Activated naive CD4-positive, alpha-beta T cell treated with anti-CD3 and anti-CD28 coated beads for 36 hours (primary cell): ENCODE measurements at regions of chrX and their contacts with region 1.

Region 1: DNA sequence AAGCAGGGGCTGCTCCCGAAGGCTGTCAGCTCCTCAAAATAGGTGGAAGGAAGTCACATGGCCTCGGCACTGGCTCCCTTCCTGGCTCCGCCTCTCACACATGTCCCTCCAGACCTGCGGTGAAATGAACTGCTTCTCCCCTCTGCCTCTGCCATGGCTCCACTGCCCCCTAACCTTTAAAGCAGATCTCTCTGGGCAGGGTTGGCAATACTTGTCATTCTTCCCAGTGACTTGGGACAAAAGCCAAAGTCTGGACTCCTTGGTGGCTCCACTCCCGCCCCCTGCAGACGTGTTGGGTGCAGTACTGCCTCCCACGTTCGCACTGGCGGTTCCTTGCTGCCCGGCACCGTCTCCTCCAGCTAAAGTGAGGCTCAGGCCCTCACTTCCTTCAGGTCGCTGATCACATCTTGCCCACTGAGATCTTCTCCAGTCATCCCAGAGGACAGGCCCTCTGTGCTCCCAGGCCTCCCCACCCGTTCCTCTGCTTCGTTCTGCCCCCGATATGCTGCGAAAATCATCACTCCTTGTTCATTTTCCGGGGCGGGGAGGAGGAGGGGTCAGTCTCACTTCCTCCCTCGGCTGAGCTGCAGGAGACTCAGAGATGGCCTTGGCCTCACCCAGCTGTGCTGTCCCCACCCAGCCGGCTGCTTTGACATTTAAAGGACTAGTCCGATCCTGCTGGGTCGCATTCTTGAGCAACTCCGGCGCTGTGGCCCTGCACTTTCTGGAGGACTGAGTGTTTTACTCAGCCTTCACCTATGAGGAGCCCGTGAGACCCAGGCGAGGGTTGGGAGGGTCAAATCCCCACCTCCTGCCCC is 97.4 kb downstream of the PHKA2 start:
- DNase-seq: peak; percentile 73
- H3K4me3 Mint-ChIP-seq: peak overlapping the region; percentile 75
- H3K27ac Mint-ChIP-seq: peak overlapping the region; percentile 84
- H3K4me1 Mint-ChIP-seq: peaks cover 28% of the 10 kb centered on the region
- H3K27me3 Mint-ChIP-seq: no peaks in the 10 kb centered on the region

Region 2: DNA sequence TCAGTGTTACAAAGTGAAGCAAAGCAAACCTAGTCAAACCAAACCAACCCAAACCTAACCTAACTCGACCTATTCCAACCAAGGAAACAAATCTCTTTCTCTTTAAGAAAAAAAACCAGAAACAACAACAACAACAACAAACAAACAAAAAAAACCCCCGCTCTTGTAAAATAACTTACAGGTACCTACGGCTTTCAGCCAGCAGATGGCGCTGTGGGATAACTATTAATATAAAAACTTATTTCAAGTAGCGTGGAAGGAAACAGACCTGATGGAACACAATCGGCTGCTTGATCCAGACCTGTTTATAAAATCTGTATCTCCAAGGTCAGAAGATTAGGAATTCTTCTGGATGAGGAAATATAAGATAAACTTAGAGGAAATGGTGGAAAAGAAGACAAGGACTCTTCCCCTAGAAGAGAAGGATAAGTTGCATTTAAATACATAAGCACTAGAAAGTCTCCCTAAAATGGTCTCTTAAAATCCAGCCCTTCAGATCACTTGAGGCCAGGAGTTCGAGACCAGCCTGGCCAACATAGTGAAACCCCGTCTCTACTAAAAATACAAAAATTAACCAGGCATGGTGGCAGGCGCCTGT is 495.5 kb before region 1 on chrX:
- CTCF ChIA-PET with region 1: interaction called, 8 read pairs
- intact Hi-C with region 1: loop called (anchors 5 kb)
- DNase-seq: peak; percentile 70
- H3K4me3 Mint-ChIP-seq: no peak overlapping the region
- H3K27ac Mint-ChIP-seq: no peak overlapping the region
- H3K4me1 Mint-ChIP-seq: no peaks in the 10 kb centered on the region
- H3K27me3 Mint-ChIP-seq: no peaks in the 10 kb centered on the region

Region 3: DNA sequence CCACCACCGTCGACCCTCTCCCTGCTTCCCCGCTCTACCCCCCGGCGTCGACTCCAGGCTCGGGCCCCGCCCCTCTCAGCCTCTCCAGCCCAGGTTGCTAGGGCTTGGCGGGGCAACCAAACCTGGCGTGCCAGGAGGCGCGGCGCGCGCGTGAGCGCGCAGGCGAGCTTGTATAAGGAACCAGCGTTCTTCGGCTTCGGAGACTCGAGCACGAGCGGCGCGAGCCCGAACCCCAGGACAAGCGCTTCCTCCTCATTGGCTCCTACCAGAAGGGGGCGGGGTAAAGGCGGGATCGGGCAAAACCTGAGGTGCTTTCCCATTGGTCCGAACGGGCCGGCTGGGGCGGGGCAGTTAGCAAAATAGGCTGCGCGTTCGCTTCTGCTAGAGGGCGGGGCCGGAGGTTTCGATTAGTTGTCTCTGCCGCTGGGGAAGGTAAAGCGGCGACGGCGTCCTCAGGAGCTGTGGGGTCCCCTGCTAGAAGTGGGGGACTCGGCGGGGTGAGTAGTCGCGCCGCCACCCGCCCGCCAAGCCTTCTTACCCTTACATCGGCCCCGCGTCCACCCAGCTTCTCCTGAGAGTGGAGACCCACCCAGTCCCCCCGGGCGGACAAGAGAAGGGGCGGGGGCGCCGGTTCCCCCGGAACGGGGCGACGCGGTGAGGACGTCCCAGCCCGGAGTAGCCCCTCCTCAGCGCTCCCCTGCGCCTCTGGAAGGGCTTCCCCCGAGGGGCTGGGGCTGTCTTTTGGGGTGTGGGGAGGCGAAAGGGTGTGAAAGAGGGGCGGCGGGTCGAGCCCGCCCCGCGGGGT is 461.2 kb before region 1 on chrX and contains the start of gene CDKL5:
- CTCF ChIA-PET with region 1: no interaction called
- intact Hi-C with region 1: loop called (anchors 1 kb)
- DNase-seq: peak; percentile 97
- H3K4me3 Mint-ChIP-seq: peak within 1 kb of the TSS; percentile 77
- H3K27ac Mint-ChIP-seq: no peak within 1 kb of the TSS
- H3K4me1 Mint-ChIP-seq: peaks cover 7% of the 10 kb centered on the region
- H3K27me3 Mint-ChIP-seq: no peaks in the 10 kb centered on the region
- total RNA-seq, gene CDKL5: 0.91 to 1.4 TPM

Region 4: DNA sequence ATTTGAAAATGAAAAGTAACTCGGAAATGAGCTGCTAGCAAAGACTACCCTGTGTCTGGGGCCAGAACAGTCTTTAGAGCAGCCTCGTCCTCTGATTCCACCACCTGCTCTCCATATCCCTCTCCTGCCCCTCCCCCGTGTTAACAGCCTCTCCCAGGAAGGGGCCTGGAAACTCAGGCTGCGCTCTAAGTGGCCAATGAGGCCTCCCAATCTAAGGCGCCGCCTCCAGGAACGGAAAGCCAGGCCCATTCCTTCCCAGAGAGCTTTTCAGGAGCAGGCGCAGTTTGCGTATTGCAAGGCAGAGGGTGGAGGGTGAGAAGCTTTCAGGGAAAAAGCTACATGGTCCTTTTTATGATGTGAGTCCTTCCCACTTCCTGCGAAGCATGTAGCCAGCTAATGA is 245.9 kb before region 1 on chrX:
- CTCF ChIA-PET with region 1: no interaction called
- intact Hi-C with region 1: no loop called
- DNase-seq: no peak
- H3K4me3 Mint-ChIP-seq: no peak overlapping the region
- H3K27ac Mint-ChIP-seq: no peak overlapping the region
- H3K4me1 Mint-ChIP-seq: no peaks in the 10 kb centered on the region
- H3K27me3 Mint-ChIP-seq: no peaks in the 10 kb centered on the region

Region 5: GRCh38 chrX:18674788-18675735 is 211.5 kb before region 1 on chrX:
- CTCF ChIA-PET with region 1: no interaction called
- intact Hi-C with region 1: loop called (anchors 1 kb)
- DNase-seq: peak; percentile 72
- H3K4me3 Mint-ChIP-seq: peak overlapping the region; percentile 67
- H3K27ac Mint-ChIP-seq: peak overlapping the region; percentile 75
- H3K4me1 Mint-ChIP-seq: peaks cover 8% of the 10 kb centered on the region
- H3K27me3 Mint-ChIP-seq: no peaks in the 10 kb centered on the region

Region 6: DNA sequence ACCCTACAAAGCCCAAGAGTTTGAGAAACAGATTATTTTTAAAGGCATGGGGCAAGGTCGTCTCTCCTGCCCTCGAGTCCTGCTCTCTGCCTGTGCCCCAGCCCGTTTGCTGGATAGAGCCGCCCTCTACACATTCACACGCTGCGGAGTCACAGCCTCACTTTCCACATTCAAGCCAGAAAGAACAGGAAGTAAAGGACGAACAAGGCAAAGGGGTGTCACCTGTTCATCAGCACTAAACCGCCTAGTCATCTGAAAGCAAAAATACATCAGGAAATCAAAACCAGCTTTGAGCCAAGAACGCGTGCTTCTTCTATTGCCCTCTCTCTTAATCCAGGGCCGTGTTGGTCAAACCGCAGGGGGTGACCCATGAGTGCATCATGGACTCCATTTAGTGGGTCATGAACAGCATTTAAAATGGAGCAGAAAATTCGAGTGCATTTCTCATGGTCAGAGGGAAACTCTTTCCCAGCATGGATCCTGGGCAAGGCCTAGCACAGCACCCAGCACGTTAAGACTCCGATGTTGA is 14.0 kb after region 1 on chrX:
- CTCF ChIA-PET with region 1: no interaction called
- intact Hi-C with region 1: no loop called
- DNase-seq: no peak
- H3K4me3 Mint-ChIP-seq: no peak overlapping the region
- H3K27ac Mint-ChIP-seq: no peak overlapping the region
- H3K4me1 Mint-ChIP-seq: peaks cover 3% of the 10 kb centered on the region
- H3K27me3 Mint-ChIP-seq: no peaks in the 10 kb centered on the region

Region 7: DNA sequence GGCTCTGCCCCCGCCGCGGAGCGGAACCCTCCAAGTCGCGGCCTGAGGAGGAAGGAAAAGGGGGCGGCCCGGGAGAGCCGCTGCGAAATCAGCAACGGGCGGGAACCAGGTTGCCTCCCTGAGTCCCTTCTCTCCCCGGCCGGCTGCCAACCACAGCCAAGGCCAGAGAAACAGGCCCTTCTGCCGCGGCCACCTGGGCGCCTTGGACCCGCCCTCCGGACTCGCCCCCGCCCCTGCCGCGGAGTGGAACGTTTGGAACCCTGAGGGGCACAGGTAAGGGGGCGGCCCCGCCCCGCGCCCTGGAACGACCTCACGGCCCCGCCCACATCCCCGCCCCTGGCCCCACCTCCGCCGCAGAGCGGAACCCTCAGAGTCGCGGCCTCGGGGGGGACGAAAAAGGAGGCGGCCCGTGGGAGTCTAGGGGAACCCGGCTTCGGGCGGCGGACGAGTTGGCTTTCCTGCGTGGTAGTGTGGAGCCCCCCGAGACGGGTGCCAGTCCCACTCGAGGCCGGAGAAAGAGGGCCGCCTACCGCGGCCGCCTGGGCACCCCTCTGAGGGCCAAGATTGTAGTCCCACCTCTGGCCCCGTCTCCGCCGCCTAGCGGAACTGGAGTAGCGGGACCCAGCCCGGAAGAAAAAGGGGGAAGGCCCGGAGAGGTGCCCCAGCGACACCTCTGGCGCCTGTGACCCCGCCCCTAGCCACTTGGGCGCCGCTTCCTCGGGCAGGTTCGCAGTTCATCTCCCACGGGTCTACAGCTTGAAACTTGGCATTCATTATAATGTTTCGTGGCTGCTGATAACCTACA is 98.0 kb after region 1 on chrX:
- CTCF ChIA-PET with region 1: no interaction called
- intact Hi-C with region 1: loop called (anchors 2 kb)
- DNase-seq: peak; percentile 85
- H3K4me3 Mint-ChIP-seq: peak overlapping the region; percentile 88
- H3K27ac Mint-ChIP-seq: peak overlapping the region; percentile 88
- H3K4me1 Mint-ChIP-seq: peaks cover 11% of the 10 kb centered on the region
- H3K27me3 Mint-ChIP-seq: no peaks in the 10 kb centered on the region

Region 8: GRCh38 chrX:19225924-19226323 is 339.4 kb after region 1 on chrX:
- CTCF ChIA-PET with region 1: no interaction called
- intact Hi-C with region 1: no loop called
- DNase-seq: no peak
- H3K4me3 Mint-ChIP-seq: no peak overlapping the region
- H3K27ac Mint-ChIP-seq: no peak overlapping the region
- H3K4me1 Mint-ChIP-seq: no peaks in the 10 kb centered on the region
- H3K27me3 Mint-ChIP-seq: peaks cover 13% of the 10 kb centered on the region

Region 9: GRCh38 chrX:19343535-19344408 is 457.2 kb after region 1 on chrX and contains the start of gene PDHA1:
- CTCF ChIA-PET with region 1: no interaction called
- intact Hi-C with region 1: loop called (anchors 5 kb)
- DNase-seq: peak; percentile 94
- H3K4me3 Mint-ChIP-seq: peak within 1 kb of the TSS; percentile 83
- H3K27ac Mint-ChIP-seq: peak within 1 kb of the TSS; percentile 78
- H3K4me1 Mint-ChIP-seq: peaks cover 21% of the 10 kb centered on the region
- H3K27me3 Mint-ChIP-seq: no peaks in the 10 kb centered on the region
- total RNA-seq, gene PDHA1: 233 to 242 TPM